ENCODE measurements at regions of chr18 and their contacts with region 1.

Region 1: GRCh38 chr18:48832938-48833700 is 117.6 kb downstream of the SMAD7 start:
- DNase-seq: no peak
- H3K4me3 Mint-ChIP-seq: peak overlapping the region; percentile 77
- H3K27ac Mint-ChIP-seq: peak overlapping the region; percentile 95
- H3K4me1 Mint-ChIP-seq: peaks cover 58% of the 10 kb centered on the region
- H3K27me3 Mint-ChIP-seq: no peaks in the 10 kb centered on the region

Region 2: DNA sequence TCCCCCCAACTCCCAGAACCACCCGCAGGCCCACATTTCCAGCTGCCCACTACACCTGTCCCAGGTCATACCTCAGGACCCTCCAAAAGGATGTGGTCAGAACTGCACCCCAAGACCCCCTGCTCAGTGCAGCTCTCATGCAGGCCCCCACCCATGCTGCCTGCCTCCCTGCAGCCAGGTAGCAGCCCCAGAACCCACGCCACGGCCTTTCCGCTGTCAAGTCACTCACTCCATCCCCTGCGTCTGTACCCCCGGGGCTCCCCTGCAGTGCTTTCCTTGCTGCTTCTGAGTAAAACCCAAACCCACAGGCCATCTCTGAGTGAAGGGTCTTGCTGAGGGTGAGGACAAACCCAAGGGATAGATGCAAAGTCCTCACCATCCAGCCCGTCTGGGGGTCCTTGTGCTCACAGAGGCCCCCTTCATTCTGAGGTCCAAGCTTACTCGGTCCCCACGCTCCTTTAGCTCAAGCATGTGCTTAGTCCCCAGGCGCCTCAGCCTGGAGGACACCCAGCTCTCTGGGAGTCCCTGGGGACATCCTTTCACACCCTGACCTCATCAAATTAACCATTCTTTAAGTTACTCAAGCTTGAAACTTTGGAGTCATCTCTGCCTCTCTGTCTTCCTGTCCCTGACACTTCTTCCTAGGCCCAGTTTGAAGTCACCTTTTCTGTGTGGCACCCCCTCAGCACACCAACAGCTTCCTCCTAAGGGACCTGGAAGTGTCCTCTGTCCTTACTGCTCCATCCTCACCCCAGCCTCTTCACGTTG is 12.5 kb before region 1 on chr18:
- CTCF ChIA-PET with region 1: interaction called, 11 read pairs
- POLR2A ChIA-PET with region 1: interaction called, 4 read pairs
- DNase-seq: no peak
- H3K4me3 Mint-ChIP-seq: no peak overlapping the region
- H3K27ac Mint-ChIP-seq: no peak overlapping the region
- H3K4me1 Mint-ChIP-seq: peaks cover 18% of the 10 kb centered on the region
- H3K27me3 Mint-ChIP-seq: peaks cover 4% of the 10 kb centered on the region

Region 3: GRCh38 chr18:48859311-48860268 is 26.5 kb after region 1 on chr18:
- CTCF ChIA-PET with region 1: no interaction called
- POLR2A ChIA-PET with region 1: no interaction called
- DNase-seq: no peak
- H3K4me3 Mint-ChIP-seq: no peak overlapping the region
- H3K27ac Mint-ChIP-seq: peak overlapping the region; percentile 78
- H3K4me1 Mint-ChIP-seq: peaks cover 20% of the 10 kb centered on the region
- H3K27me3 Mint-ChIP-seq: no peaks in the 10 kb centered on the region

Region 4: GRCh38 chr18:48902023-48902855 is 69.1 kb after region 1 on chr18:
- CTCF ChIA-PET with region 1: no interaction called
- POLR2A ChIA-PET with region 1: no interaction called
- DNase-seq: no peak
- H3K4me3 Mint-ChIP-seq: no peak overlapping the region
- H3K27ac Mint-ChIP-seq: no peak overlapping the region
- H3K4me1 Mint-ChIP-seq: peaks cover 9% of the 10 kb centered on the region
- H3K27me3 Mint-ChIP-seq: peaks cover 13% of the 10 kb centered on the region

Measured in activated CD4-positive, alpha-beta T cell treated with anti-CD3 and anti-CD28 coated beads, Interleukin-2, amount 10 ng/mL, durations not matched to agents 7 days and 5 days (primary cell).